ENCODE measurements at regions of chr4 and their contacts with region 1.

Region 1: DNA sequence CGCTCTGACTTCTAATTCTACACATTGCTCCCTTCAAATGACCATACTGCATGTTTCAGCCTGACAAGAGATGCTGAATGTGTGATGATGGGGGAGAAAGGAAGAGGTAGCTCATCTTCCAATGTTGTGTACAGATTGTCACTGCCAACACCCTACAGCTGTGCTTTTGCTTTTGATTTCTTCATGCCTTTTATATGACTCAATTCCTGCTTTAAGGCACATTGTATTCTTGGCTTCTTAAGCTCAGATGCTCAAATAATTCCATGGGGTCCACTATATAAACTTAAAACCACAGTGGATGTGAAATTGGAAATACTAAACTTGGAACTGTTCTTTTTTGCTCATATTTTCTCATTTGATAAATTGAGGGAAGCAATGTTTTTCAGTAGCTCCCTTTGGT is 183.2 kb upstream of the WDFY3 start:
- DNase-seq: no peak
- H3K4me3 ChIP-seq: no peak overlapping the region
- H3K27ac ChIP-seq: no peak overlapping the region
- H3K4me1 ChIP-seq: no peaks in the 10 kb centered on the region
- H3K27me3 ChIP-seq: no peaks in the 10 kb centered on the region
- CTCF ChIP-seq: no peak

Region 2: DNA sequence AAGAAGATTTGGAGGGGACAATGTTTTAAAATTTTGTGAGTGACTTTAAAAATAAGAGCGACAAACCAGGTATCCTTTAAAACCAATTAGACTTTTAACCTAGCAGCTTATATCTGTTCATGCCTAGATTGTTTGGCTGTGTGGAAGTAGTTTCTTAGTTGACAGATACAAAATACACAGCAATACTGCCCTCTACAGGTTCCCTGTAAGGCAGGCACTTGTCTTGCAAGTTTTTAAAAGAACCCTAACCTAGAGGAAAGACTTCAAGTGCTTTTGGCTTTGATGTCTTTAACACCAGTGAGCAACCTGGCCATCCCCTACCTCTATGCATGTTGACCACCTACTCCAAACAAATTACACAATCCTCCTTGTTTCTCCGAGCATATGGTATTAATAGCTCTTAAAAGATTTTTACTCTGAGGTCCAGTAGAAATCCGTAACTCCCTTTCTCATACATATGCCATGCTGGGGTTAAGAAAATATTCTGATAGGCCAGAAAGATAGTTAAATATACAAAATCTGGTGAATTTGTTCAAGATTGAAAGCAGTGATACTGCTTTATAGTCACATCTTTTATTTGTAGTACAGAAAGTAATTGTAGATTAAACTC is 598.3 kb after region 1 on chr4:
- intact Hi-C with region 1: loop called (anchors 10 kb)
- DNase-seq: no peak
- H3K4me3 ChIP-seq: no peak overlapping the region
- H3K27ac ChIP-seq: no peak overlapping the region
- H3K4me1 ChIP-seq: no peaks in the 10 kb centered on the region
- H3K27me3 ChIP-seq: no peaks in the 10 kb centered on the region
- CTCF ChIP-seq: peak; percentile 74 to 91

Measured in tibial artery (tissue), 4 donors.